ENCODE measurements at regions of chr10 and their contacts with region 1.

Region 1: DNA sequence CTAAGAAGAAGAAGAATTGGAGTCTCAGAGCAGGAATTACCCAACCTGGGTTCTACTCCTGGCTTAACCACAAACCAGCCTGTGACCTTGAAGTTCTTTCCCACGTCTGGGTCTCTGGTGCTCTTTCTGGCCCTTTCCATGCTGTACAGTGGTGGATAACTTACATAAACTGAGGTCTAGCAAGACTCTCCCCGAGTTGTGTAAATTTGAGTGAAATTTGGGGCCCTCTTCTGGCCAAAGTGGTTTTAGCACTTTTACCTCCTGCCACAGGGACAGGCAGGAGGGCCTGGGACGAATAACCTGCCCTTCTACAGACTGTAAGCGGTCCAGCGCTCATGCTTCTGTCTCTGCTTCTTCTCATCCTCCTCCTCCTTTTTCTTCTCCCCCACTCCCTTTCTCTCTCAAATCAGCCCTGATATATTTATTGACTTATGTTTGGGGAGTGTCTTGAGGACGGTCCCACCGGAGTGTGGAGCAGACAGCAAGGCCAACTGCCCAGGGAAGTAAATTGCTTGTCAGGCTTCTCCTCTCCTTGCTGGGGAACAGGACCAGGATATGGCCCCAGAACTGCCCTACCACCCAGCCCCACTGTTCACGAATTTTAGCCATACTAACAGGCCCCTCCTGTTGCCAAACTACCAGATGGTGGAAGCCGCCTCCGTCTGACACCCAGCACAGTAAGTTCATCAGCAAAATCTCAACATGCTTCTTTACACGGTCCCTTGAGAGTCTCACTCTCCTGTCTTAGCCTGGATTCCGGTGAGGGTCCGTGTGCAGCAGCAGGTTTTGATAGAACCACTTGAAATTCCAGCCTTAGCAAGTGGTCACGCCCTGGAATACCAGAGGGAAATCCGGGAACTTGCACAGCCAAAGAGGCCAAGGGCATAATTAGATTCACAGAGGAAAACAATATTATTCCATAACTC is 4.0 kb upstream of the SH3PXD2A start:
- DNase-seq: peak; percentile 78
- H3K4me3 ChIP-seq: no peak overlapping the region
- H3K27ac ChIP-seq: no peak overlapping the region
- H3K4me1 ChIP-seq: peaks cover 0 to 17% (median 11%) of the 10 kb centered on the region in 4 donors
- H3K27me3 ChIP-seq: no peaks in the 10 kb centered on the region
- CTCF ChIP-seq: peak; percentile 64 to 81 (median 73)
- EP300 ChIP-seq: no peak
- POLR2A ChIP-seq: no peak

Region 2: GRCh38 chr10:103125323-103126267 is 733.8 kb before region 1 on chr10:
- intact Hi-C with region 1: no loop called
- DNase-seq: no peak
- H3K4me3 ChIP-seq: no peak overlapping the region
- H3K27ac ChIP-seq: no peak overlapping the region
- H3K4me1 ChIP-seq: peaks cover 0 to 32% (median 25%) of the 10 kb centered on the region in 4 donors
- H3K27me3 ChIP-seq: no peaks in the 10 kb centered on the region
- CTCF ChIP-seq: no peak
- EP300 ChIP-seq: no peak
- POLR2A ChIP-seq: no peak

Region 3: GRCh38 chr10:103512196-103512990 is 347.0 kb before region 1 on chr10:
- intact Hi-C with region 1: no loop called
- DNase-seq: no peak
- H3K4me3 ChIP-seq: no peak overlapping the region
- H3K27ac ChIP-seq: peak overlapping the region in 2 of 4 donors; percentile 64 to 66
- H3K4me1 ChIP-seq: peaks cover 0 to 40% (median 32%) of the 10 kb centered on the region in 4 donors
- H3K27me3 ChIP-seq: no peaks in the 10 kb centered on the region
- CTCF ChIP-seq: no peak
- EP300 ChIP-seq: no peak
- POLR2A ChIP-seq: no peak

Region 4: GRCh38 chr10:103592186-103593021 is 267.0 kb before region 1 on chr10:
- intact Hi-C with region 1: loop called (anchors 10 kb)
- DNase-seq: no peak
- H3K4me3 ChIP-seq: no peak overlapping the region
- H3K27ac ChIP-seq: no peak overlapping the region
- H3K4me1 ChIP-seq: no peaks in the 10 kb centered on the region
- H3K27me3 ChIP-seq: no peaks in the 10 kb centered on the region
- CTCF ChIP-seq: peak in 3 of 4 experiments; percentile 28 to 69 (median 31)
- EP300 ChIP-seq: no peak
- POLR2A ChIP-seq: no peak

Region 5: DNA sequence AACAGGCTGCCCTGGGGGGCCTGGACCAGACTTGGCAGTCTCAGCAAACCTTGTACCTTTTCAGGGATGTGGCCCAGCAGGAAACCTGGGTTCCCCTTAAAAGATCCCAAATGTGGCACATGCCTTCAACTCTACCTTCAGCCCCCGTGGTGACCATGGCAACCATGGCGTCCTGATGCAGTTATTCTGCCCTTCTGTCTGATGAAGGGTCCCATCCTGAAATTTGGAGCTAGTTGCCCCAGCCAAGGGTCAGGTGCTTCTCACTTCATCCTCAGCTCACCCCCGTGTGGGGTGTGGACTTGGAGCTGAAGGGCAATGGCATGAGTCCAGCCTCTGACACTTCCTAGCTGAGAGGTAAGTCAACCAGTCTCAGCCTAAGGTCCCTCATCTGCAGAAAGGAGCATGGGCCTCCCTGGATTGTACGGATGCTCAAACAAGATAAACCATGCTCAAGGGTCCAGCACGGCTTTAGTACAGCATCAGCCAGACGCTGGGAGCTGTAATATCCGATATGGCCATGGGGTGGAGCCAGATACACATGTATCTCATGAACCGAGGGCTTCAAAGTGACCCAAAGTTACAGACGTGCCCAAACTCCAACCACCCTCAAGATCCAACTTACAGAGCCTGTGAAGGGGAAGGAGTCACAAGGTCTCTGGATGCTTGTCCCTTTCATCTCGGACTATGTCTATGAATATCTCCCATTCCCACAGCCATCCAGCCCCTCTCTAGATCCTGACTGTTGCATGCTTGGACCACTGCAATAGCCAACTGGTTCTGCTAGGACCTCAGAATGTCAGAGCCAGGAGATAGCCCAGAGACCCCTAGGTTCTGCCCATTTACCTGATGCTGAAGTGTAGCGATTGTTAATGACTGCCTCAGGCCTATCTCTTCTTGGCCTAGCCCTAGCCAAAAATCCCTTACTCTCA is 146.6 kb before region 1 on chr10:
- intact Hi-C with region 1: loop called (anchors 1 kb)
- DNase-seq: peak; percentile 91
- H3K4me3 ChIP-seq: no peak overlapping the region
- H3K27ac ChIP-seq: peak overlapping the region in 2 of 4 donors; percentile 17 to 19
- H3K4me1 ChIP-seq: peaks cover 0 to 16% (median 0%) of the 10 kb centered on the region in 4 donors
- H3K27me3 ChIP-seq: no peaks in the 10 kb centered on the region
- CTCF ChIP-seq: peak; percentile 90 to 97 (median 93)
- EP300 ChIP-seq: no peak
- POLR2A ChIP-seq: no peak

Region 6: DNA sequence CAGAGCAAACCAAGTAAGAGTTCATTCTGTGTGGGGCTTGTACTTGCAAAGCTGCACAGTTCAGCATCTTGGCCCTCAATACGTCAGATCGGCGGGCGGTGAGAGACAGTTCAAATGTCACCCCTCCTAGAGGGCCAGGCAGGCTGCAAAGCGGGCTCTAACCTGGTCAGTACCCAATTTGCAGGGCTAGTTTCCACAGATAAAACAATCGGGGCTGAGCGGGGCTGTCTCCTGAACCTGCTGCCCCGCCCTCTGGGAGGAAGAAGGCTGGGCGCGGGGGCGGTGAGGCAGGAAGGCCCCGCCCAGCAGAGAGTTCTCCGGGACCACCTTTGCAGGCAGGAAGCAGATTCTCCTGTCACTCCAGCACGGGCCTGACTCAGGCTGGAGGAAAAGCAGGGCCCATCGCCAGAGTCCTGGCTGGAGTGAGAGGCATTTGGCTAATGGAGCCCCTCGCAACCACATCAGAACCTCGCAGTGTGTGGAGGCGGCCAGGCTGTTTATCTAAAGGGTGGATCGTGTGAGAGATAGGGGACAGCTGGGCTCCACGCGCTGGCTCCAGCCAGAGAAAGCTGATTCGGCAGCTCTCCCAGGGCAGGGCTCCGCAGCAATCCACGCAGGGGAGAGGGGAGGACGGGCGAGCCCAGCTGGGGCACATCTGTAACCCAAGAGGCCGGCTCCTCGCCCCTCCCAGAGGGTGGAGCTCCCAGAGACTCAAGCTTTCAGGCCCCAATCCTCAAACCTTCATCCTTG is 87.2 kb before region 1 on chr10:
- intact Hi-C with region 1: loop called (anchors 5 kb)
- DNase-seq: peak; percentile 96
- H3K4me3 ChIP-seq: peak overlapping the region; percentile 22 to 49 (median 44)
- H3K27ac ChIP-seq: peak overlapping the region; percentile 68 to 82 (median 76)
- H3K4me1 ChIP-seq: peaks cover 0 to 17% (median 16%) of the 10 kb centered on the region in 4 donors
- H3K27me3 ChIP-seq: no peaks in the 10 kb centered on the region
- CTCF ChIP-seq: no peak
- EP300 ChIP-seq: no peak
- POLR2A ChIP-seq: no peak

Region 7: DNA sequence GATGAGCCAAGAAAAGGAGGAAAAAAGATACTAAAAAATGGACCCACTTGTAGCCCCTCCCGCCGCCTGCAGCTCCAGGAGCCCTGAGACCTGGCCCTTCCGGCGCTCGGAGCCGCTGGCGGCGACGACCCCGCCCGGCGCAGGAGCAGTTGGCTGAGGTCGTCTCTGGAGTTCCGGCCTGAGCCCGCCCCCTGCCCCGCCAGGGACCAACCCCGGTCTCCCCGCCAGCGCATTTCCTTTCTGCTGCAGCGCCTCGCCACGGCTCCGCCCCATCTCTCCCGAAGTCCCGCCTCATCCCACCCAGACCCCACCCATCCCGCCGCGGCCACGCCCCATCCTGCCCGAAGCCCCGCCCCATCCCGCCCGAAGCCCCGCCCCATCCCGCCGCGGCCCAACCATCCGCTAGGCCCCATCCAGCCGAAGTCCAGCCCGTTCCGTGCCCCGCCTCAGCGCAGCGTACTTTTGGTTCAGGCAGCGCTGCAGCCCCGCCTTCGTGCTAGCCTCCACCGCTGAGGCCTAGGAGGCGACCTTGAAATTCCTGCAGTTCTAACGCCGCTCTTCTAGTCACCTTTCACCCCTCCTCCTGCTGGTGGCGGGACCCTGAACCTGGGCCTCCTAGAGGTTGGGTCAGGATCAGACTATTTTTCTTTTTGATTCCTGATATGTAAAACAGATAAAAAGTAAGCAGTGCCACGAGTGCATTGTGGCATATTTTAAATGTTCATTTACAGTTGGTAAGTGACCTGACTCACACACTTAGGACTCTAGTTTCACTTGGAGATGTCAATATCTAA is 58.8 kb after region 1 on chr10 and contains the start of gene STN1:
- intact Hi-C with region 1: no loop called
- DNase-seq: peak; percentile 99
- H3K4me3 ChIP-seq: peak within 1 kb of the TSS; percentile 46 to 78 (median 70)
- H3K27ac ChIP-seq: peak within 1 kb of the TSS; percentile 91 to 97 (median 94)
- H3K4me1 ChIP-seq: peaks cover 0 to 31% (median 27%) of the 10 kb centered on the region in 4 donors
- H3K27me3 ChIP-seq: no peaks in the 10 kb centered on the region
- CTCF ChIP-seq: peak in 1 of 4 experiments; percentile 14
- EP300 ChIP-seq: peak in 1 of 4 donors; percentile 43
- POLR2A ChIP-seq: peak; percentile 90 to 96
- total RNA-seq, gene STN1: 16.0 to 22.5 (median 21.1) TPM

Region 8: GRCh38 chr10:104029521-104029860 is 170.1 kb after region 1 on chr10:
- intact Hi-C with region 1: no loop called
- DNase-seq: no peak
- H3K4me3 ChIP-seq: no peak overlapping the region
- H3K27ac ChIP-seq: no peak overlapping the region
- H3K4me1 ChIP-seq: no peaks in the 10 kb centered on the region
- H3K27me3 ChIP-seq: no peaks in the 10 kb centered on the region
- CTCF ChIP-seq: no peak
- EP300 ChIP-seq: no peak
- POLR2A ChIP-seq: no peak